Naive thymus-derived CD4-positive, alpha-beta T cell (primary cell): ENCODE measurements at regions of chr11 and their contacts with region 1.

Region 1: DNA sequence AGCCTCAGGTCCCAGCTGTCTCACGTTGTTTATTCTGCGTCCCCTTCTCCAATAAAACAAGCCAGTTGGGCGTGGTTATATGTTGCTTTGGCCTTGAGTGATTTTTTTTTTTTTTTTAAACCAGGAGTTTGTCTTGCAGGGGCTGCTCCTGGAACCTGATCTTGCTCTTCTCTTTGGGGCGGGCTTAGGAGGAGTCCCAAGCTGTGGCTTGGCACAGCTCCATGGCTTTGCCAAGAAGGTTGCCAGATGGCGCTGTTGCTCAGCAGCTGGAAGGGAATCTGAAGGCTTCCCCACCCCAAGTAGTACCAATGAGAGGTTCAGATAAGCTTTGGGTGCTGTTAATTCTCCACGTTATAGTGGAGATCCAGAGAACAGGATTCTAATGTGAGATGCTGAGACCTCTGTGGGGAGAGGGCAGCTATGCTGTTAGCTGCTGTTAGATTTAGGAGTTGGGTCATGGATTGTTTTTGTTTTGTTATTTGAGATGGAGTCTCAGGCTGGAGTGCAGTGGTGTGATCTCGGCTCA is 2.0 kb upstream of the FERMT3 start:
- DNase-seq: peak; percentile 61 to 89 (median 83)
- ATAC-seq: peak; percentile 75
- H3K4me3 ChIP-seq: no peak overlapping the region
- H3K4me3 Mint-ChIP-seq: peak overlapping the region; percentile 27 to 87 (median 68)
- H3K27ac ChIP-seq: no peak overlapping the region
- H3K27ac Mint-ChIP-seq: peak overlapping the region; percentile 43 to 98 (median 86)
- H3K4me1 ChIP-seq: peaks cover 28 to 32% of the 10 kb centered on the region in 2 donors
- H3K4me1 Mint-ChIP-seq: peaks cover 25 to 51% (median 36%) of the 10 kb centered on the region in 7 donors
- H3K27me3 ChIP-seq: no peaks in the 10 kb centered on the region
- H3K27me3 Mint-ChIP-seq: no peaks in the 10 kb centered on the region

Region 2: GRCh38 chr11:64216879-64217278 is 12.4 kb after region 1 on chr11:
- CTCF ChIA-PET with region 1: interaction called, 25 read pairs
- POLR2A ChIA-PET with region 1: interaction called, 220 read pairs
- intact Hi-C with region 1: no loop called
- DNase-seq: no peak
- ATAC-seq: no peak
- H3K4me3 ChIP-seq: no peak overlapping the region
- H3K4me3 Mint-ChIP-seq: no peak overlapping the region
- H3K27ac ChIP-seq: no peak overlapping the region
- H3K27ac Mint-ChIP-seq: peak overlapping the region in 5 of 9 donors; percentile 22 to 47 (median 28)
- H3K4me1 ChIP-seq: no peaks in the 10 kb centered on the region
- H3K4me1 Mint-ChIP-seq: peaks cover 10 to 25% (median 13%) of the 10 kb centered on the region in 7 donors
- H3K27me3 ChIP-seq: no peaks in the 10 kb centered on the region
- H3K27me3 Mint-ChIP-seq: no peaks in the 10 kb centered on the region

Region 3: GRCh38 chr11:64240394-64241174 is 36.1 kb after region 1 on chr11 and contains the start of gene FKBP2:
- CTCF ChIA-PET with region 1: interaction called, 30 read pairs
- POLR2A ChIA-PET with region 1: interaction called, 94 read pairs
- intact Hi-C with region 1: loop called (anchors 1 to 2 kb)
- DNase-seq: peak; percentile 97 to 99 (median 98)
- ATAC-seq: peak; percentile 78
- H3K4me3 ChIP-seq: peak within 1 kb of the TSS; percentile 73
- H3K4me3 Mint-ChIP-seq: peak within 1 kb of the TSS; percentile 80 to 95 (median 89)
- H3K27ac ChIP-seq: peak within 1 kb of the TSS; percentile 99
- H3K27ac Mint-ChIP-seq: peak within 1 kb of the TSS; percentile 97 to 100 (median 99)
- H3K4me1 ChIP-seq: peaks cover 24 to 28% of the 10 kb centered on the region in 2 donors
- H3K4me1 Mint-ChIP-seq: peaks cover 9 to 46% (median 31%) of the 10 kb centered on the region in 7 donors
- H3K27me3 ChIP-seq: no peaks in the 10 kb centered on the region
- H3K27me3 Mint-ChIP-seq: no peaks in the 10 kb centered on the region
- total RNA-seq, gene FKBP2: 20.3 to 46.6 (median 33.5) TPM

Region 4: GRCh38 chr11:64269380-64270234 is 65.1 kb after region 1 on chr11:
- CTCF ChIA-PET with region 1: interaction called, 66 read pairs
- POLR2A ChIA-PET with region 1: interaction called, 81 read pairs
- intact Hi-C with region 1: loop called in 1 of 2 experiments (anchors 1 kb)
- DNase-seq: peak; percentile 89 to 98 (median 98)
- ATAC-seq: peak; percentile 82
- H3K4me3 ChIP-seq: peak overlapping the region; percentile 91
- H3K4me3 Mint-ChIP-seq: peak overlapping the region; percentile 95 to 100 (median 98)
- H3K27ac ChIP-seq: peak overlapping the region; percentile 95
- H3K27ac Mint-ChIP-seq: peak overlapping the region; percentile 94 to 99 (median 99)
- H3K4me1 ChIP-seq: peaks cover 8 to 10% of the 10 kb centered on the region in 2 donors
- H3K4me1 Mint-ChIP-seq: peaks cover 8 to 29% (median 24%) of the 10 kb centered on the region in 7 donors
- H3K27me3 ChIP-seq: no peaks in the 10 kb centered on the region
- H3K27me3 Mint-ChIP-seq: no peaks in the 10 kb centered on the region

Region 5: DNA sequence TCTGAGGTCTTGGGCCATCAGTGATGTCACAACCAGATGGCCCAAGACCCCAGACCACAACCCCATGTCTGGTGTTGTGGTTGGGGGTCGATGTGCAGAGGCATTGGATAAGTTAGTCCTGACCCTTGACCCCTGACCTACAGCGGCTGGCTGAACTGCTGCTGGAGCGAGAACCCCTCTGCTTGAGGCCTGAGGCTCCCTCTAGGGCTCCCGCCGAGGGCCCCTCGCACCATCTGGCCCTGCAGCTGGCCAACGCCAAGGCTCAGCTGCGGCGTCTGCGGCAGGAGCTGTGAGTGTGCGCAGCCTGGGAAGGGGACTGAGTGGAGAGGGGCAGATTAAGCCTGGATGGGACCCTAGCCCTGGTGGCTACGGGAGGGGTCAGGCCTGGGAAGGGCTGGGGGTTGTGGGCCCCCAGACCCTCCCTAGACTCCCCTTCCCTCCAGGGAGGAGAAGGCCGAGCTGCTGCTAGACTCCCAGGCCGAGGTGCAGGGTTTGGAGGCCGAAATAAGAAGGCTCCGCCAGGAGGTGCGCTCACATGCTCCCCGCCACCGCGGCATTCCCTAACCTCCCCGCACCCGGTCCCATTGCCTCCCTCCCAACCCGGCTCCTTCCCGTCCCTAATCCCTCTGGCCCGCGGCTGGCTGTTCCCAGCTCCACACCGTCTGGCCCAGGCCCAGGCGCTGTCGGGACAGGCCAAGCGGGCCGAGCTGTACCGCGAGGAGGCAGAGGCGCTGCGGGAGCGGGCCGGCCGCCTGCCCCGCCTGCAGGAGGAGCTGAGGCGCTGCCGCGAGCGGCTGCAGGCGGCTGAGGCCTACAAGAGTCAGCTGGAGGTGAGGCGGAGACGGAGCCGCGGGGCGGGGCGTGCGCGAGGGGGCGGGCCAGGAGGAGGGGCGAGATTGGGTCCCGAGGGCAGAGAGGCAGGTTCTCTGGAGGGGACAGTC is 137.6 kb after region 1 on chr11:
- CTCF ChIA-PET with region 1: interaction called, 10 read pairs
- POLR2A ChIA-PET with region 1: interaction called, 12 read pairs
- intact Hi-C with region 1: no loop called
- DNase-seq: peak; percentile 82 to 96 (median 88)
- ATAC-seq: peak; percentile 80
- H3K4me3 ChIP-seq: no peak overlapping the region
- H3K4me3 Mint-ChIP-seq: peak overlapping the region in 9 of 10 donors; percentile 9 to 91 (median 76)
- H3K27ac ChIP-seq: peak overlapping the region; percentile 40
- H3K27ac Mint-ChIP-seq: peak overlapping the region in 3 of 9 donors; percentile 25 to 75 (median 42)
- H3K4me1 ChIP-seq: peaks cover 29 to 30% of the 10 kb centered on the region in 2 donors
- H3K4me1 Mint-ChIP-seq: peaks cover 23 to 49% (median 30%) of the 10 kb centered on the region in 7 donors
- H3K27me3 ChIP-seq: no peaks in the 10 kb centered on the region
- H3K27me3 Mint-ChIP-seq: peaks cover 0 to 2% (median 0%) of the 10 kb centered on the region in 5 donors

Region 6: DNA sequence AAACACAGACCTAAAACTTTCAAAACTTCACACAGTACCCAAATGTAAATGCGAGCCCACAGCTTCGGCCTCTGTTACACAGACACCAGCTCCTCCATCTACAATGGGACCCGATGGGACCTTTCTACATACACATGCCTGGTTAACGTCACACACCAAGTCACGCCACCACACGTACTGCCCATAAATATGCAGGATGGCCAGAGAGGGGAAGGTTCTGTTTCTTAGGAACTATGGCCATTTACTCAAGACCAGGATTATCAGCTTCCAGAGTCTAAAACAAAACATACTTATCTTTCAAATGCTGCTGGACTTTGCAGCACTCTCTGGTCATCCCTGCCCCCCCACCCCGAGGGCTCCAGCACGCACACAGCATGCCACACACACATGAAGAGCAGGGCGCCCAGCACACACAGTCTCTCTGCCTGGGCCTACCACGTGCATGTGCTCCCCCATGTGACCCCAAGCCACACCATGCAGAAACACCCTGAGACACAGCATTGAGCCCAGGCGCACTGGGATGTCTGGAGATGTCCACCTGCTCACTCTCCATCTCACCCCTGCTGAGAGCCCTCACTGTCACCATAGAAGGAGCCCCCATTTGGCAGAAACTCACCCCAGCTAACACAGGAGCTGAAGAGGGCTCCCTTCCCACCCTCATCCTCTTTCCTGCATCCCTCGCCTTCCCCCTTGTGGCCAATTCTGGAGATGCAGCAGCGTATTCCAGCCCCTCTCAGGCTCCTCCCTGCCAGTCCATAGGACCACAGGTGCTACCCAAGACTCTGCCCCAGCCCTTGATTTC is 448.3 kb after region 1 on chr11:
- CTCF ChIA-PET with region 1: no interaction called
- POLR2A ChIA-PET with region 1: no interaction called
- intact Hi-C with region 1: loop called in 1 of 2 experiments (anchors 2 kb)
- DNase-seq: peak; percentile 45 to 77 (median 61)
- ATAC-seq: peak; percentile 80
- H3K4me3 ChIP-seq: no peak overlapping the region
- H3K4me3 Mint-ChIP-seq: no peak overlapping the region
- H3K27ac ChIP-seq: no peak overlapping the region
- H3K27ac Mint-ChIP-seq: no peak overlapping the region
- H3K4me1 ChIP-seq: no peaks in the 10 kb centered on the region
- H3K4me1 Mint-ChIP-seq: peaks cover 0 to 10% (median 4%) of the 10 kb centered on the region in 7 donors
- H3K27me3 ChIP-seq: no peaks in the 10 kb centered on the region
- H3K27me3 Mint-ChIP-seq: peaks cover 0 to 20% (median 10%) of the 10 kb centered on the region in 5 donors